Left cardiac atrium (tissue), 4 donors: ENCODE measurements at regions of chr14 and their contacts with region 1.

Region 1: DNA sequence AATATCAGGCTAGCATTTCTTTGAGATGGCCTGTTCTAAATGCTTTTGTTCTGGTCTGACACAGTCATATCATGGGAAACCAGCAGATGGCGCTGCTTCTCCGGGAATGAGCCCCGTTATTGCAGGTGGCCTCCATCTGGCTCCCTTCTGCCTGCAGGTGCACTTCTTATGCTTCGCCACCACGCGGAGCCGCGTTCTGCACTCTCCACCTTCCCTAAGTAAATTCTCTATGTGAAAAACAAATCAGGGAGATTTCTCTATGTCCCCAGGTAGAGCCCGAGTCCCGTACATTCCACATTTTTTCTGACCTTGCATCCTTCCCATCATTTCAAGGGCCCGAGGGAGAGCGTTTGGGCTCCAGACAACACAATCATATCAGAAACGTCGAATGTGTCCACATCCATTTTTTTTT is 26.2 kb downstream of the GLRX5 start:
- DNase-seq: peak; percentile 82
- ATAC-seq: peak; percentile 83 to 88

Region 2: GRCh38 chr14:95319312-95320021 is 241.5 kb before region 1 on chr14 and contains the start of gene CLMN:
- intact Hi-C with region 1: no loop called
- DNase-seq: peak; percentile 48
- ATAC-seq: peak; percentile 57 to 82
- total RNA-seq, gene CLMN: 11.1 to 13.2 TPM

Region 3: GRCh38 chr14:95495538-95496025 is 65.4 kb before region 1 on chr14:
- intact Hi-C with region 1: no loop called
- DNase-seq: no peak
- ATAC-seq: peak in 1 of 2 donors; percentile 26

Region 4: DNA sequence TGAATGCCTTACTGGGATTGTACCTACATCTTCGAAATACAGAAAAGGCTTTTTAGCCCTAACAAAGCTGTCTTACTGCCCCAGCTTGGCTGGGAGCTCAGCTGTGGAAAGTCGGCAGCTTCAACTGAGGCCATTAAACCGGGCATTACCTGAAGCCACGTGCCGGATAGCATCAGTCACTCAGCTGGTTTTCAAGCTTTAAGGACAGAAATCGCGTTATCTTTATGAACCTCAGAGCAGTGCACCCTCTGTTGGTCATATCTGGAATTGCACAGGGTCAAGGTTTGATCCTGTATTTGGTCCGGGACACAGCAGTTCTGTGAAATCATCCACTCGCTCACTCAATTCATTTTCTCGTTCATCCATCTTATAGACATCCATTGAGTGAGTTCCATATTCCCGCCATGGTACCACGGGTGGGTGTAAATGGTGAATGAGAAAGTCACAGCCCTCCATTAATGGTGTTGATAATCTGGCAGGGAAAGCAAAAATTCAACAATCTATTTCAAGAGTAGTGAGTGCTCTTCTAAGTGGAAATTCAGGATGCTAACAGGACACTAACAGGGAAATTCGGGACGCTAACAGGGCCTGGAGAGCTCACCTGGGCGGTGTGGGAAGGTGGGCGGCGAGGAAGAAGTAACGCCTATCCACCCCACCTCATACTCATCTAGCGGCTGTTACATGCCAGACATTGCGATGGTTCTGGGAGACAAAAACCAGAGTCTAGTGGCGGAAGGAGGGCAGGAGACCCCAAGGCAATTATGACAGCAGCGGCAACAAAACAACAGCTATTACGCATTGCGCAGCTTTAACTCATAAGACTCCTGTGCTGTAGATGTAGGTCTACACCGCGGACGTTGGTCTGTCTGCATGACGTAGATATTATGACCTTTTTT is 213.5 kb after region 1 on chr14:
- intact Hi-C with region 1: loop called (anchors 5 kb)
- DNase-seq: no peak
- ATAC-seq: no peak

Region 5: GRCh38 chr14:95993768-95994592 is 433.0 kb after region 1 on chr14:
- intact Hi-C with region 1: loop called (anchors 2 to 5 kb)
- DNase-seq: no peak
- ATAC-seq: no peak

Region 6: DNA sequence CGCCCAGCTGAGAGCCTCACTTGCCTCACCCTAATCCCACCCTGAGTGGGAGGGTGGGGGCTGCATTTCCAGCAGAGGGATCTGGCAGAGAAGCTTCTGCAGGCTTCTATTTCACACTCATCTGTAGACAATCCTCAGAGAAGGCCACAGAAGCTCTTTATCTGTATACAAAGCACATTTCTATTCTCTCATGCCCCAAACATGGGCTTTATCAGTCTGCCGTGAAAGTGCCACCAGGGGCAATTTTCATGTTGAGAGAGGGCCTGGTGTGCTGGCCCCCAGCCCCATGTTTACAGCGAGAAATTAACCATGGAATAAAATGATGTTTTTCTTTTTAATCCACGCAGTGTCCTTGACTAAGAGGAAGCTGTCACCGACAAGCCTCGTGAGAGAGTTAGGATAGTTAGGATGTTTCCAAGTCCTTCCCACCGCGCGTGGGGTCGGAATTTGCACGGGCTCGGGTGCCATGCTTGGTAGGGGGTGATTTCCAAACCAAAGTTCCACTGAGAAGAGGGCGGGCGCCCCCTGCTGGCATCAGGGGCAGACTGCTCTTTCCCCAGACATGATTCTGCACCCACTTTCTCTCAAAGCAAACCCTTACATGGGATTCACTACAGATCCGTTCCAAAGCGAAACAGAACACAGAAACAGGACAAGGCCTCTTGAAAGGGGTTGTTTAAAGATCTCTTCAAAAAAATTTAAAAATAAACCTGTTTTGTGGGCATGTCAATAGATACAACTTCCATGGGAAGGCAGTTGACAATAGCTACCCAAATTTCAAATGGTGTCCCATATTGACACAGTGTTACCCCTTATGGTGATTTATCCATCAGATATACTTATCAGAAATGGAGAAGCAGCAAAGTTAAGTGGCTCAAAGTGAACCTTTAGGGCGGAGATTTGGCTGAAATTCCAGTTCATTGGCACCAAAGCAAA is 714.4 kb after region 1 on chr14:
- intact Hi-C with region 1: loop called in 1 of 2 experiments (anchors 10 kb)
- DNase-seq: peak; percentile 74
- ATAC-seq: peak; percentile 43 to 64